ENCODE measurements at regions of chr16 and their contacts with region 1.

Region 1: DNA sequence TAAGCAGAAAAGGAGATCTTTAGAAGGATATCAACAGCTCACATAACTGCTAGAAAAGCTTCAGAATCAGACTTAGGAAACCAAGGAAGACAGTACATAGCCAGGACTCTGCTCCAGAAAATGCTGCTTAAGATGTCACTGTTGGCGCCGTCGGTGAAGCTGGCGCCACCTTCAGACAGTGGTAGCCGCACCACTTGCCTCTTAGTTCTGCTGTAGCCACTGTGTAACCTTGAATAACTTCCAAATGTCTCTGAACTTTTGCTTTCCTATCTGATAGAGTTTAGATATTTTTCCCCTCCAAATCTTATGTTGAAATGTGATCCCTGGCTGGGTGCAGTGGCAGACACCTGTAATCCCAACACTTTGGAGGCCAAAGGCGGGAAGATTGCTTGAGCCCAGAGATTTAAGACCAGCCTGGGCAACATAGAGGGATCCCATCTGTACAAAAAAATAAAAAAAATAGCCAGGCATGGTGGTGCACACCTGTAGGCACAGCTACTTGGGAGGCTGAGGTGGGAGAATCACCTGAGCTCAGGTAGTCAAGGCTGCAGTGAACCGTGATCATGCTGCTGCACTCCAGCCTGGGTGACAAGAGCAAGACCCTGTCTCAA is 6.3 kb upstream of the USP31 start:
- DNase-seq: no peak
- ATAC-seq: no peak
- H3K4me3 ChIP-seq: no peak overlapping the region
- H3K27ac ChIP-seq: no peak overlapping the region
- H3K4me1 ChIP-seq: no peaks in the 10 kb centered on the region
- H3K27me3 ChIP-seq: no peaks in the 10 kb centered on the region

Region 2: DNA sequence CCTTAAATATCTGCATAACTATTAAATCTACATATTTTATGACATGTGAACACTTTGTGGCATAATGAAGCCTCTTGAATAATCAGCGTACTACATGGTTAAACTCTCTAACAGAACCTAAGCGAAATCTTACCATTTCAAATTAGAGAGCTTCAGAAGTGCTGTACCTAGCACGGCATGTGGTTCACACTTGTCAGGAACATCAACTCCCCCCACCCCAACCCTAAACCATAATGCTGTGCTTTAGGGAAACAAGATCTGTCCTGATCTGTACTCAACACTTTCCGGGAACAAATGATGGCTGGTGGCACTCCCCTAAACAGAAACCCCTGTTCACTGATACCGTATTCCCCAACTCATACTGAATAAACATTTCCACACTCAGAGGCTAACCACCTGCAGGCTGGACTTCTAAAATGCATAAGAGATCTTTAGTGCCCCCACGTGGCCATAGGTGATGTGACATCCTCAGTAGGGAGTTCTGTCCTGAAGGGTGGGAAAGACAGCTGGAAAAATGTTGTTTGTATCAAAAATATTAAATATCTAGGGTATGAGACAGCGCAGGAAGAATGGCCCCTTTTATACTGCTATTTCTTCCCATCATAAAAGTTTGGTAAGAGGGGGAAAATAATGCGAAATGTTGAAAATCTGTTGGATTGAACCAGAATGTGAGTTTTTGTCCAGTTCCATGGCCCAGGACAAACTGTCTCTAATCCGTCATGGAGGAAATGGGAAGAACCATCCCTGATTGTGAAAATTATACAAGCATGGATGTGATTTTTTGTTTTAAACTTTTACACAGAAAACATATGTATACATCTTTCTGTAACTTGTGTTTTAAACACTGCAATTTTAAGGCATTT is 94.9 kb before region 1 on chr16:
- intact Hi-C with region 1: loop called in 1 of 2 experiments (anchors 5 kb)
- DNase-seq: peak in 1 of 2 donors; percentile 62
- ATAC-seq: peak; percentile 80
- H3K4me3 ChIP-seq: no peak overlapping the region
- H3K27ac ChIP-seq: no peak overlapping the region
- H3K4me1 ChIP-seq: no peaks in the 10 kb centered on the region
- H3K27me3 ChIP-seq: no peaks in the 10 kb centered on the region

Region 3: DNA sequence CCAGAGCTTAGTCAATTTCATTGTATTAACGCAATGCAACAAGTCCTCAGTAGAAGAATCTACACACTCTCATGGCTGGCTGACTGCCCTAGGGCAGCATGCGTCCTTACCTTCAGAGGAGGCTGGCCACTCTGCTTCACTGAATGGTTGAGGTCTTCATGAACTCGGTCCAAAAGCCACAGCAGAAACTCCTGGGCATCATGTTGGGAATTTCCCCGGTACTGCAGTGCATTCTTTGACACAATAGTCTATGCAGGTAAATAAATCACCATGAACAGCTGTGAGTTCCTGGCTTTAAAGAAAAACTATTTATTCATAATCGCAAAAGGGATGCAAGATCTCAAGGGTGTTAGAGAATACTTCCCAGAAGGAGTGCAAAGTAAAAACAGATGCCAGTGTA is 47.6 kb before region 1 on chr16:
- intact Hi-C with region 1: loop called in 1 of 2 experiments (anchors 10 kb)
- DNase-seq: no peak
- ATAC-seq: no peak
- H3K4me3 ChIP-seq: no peak overlapping the region
- H3K27ac ChIP-seq: no peak overlapping the region
- H3K4me1 ChIP-seq: no peaks in the 10 kb centered on the region
- H3K27me3 ChIP-seq: no peaks in the 10 kb centered on the region

Region 4: DNA sequence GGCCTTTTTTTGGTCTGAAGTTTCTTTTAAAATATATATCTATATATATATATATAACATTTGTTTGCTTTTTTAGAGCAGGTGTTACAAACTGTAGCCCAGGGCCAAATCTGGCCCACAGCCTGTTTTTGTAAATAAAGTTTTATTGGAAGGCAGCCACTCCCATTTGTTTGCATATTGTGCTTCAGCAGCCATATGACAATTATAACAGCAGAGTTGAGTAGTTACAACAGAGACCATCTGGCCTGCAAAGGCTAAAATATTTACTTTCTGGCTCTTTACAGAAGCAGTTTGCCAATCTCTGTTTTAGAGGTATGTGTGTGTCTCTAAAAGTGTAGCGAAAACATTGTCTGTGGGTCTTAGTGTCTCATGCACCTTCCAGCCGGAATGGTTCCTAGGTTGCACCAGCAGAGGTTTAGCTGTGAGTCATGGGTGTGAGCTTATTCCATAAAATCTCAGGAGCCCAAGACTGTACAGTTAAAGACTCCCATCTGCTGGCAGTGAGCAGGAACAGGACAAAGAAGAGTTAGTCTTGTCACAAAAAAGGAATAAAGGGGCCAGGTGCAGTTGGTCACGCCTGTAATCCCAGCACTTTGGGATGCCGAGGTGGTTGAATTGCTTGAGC is 1979.8 kb after region 1 on chr16:
- intact Hi-C with region 1: loop called in 1 of 2 experiments (anchors 10 kb)
- DNase-seq: no peak
- ATAC-seq: no peak
- H3K4me3 ChIP-seq: no peak overlapping the region
- H3K27ac ChIP-seq: no peak overlapping the region
- H3K4me1 ChIP-seq: no peaks in the 10 kb centered on the region
- H3K27me3 ChIP-seq: no peaks in the 10 kb centered on the region